ENCODE measurements at regions of chr1 and their contacts with region 1.

Region 1: DNA sequence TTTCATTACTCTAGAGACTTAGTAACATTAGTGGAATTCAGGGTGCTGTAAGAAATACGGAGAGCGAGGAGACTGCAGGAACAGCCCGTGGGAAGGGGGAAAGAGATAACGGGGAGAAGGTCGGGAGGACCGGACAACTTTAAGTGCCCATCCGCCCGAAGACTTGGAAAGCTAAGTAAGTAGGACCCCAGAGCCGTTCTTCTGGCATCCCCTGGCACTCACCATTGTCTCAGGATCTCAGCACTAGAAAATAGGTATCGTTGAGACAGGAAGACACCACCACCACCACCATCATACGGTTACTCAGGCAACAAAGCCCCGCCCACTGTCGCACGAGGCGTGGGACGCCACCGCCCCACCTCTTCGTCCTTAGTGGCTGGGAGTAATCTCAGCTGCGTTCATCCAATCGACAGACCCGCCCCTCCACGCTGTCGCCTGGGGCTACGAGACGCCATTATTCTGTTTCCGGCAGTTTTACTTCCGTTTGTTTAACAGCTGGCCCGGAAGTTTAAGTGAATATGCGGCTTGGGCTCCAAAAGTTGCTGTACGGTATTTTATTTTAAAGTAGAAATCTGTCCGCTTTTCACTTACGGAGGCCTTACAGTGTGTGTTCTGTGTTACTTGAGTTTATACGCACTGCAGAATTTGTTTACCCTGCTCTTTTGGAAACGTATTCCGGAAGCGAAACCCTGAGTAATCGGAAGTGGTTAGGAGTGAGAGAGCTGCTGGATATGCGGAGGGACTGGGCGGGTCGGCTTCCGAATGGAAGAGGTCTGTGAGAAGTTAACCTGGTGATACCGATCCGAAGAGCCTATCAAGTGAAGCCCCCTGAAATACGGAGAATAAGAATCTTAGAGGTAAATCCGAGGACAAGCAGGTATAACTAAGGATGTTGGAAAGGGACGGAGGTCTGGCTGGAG is at the starts of genes BLZF1 and NME7:
- DNase-seq: peak; percentile 91 to 99 (median 98)
- ATAC-seq: peak; percentile 99
- H3K4me3 ChIP-seq: peak within 1 kb of the TSS; percentile 87
- H3K4me3 Mint-ChIP-seq: peak within 1 kb of the TSS in 3 of 10 donors; percentile 19 to 72 (median 71)
- H3K27ac ChIP-seq: peak within 1 kb of the TSS; percentile 85
- H3K27ac Mint-ChIP-seq: peak within 1 kb of the TSS in 2 of 9 donors; percentile 73 to 78
- H3K4me1 ChIP-seq: peaks cover 4 to 14% of the 10 kb centered on the region in 2 donors
- H3K4me1 Mint-ChIP-seq: peaks cover 20 to 48% (median 28%) of the 10 kb centered on the region in 7 donors
- H3K27me3 ChIP-seq: no peaks in the 10 kb centered on the region
- H3K27me3 Mint-ChIP-seq: no peaks in the 10 kb centered on the region
- total RNA-seq, gene BLZF1: 9.9 to 26.8 (median 17.5) TPM
- total RNA-seq, gene NME7: 8.6 to 14.5 (median 12.7) TPM

Region 2: DNA sequence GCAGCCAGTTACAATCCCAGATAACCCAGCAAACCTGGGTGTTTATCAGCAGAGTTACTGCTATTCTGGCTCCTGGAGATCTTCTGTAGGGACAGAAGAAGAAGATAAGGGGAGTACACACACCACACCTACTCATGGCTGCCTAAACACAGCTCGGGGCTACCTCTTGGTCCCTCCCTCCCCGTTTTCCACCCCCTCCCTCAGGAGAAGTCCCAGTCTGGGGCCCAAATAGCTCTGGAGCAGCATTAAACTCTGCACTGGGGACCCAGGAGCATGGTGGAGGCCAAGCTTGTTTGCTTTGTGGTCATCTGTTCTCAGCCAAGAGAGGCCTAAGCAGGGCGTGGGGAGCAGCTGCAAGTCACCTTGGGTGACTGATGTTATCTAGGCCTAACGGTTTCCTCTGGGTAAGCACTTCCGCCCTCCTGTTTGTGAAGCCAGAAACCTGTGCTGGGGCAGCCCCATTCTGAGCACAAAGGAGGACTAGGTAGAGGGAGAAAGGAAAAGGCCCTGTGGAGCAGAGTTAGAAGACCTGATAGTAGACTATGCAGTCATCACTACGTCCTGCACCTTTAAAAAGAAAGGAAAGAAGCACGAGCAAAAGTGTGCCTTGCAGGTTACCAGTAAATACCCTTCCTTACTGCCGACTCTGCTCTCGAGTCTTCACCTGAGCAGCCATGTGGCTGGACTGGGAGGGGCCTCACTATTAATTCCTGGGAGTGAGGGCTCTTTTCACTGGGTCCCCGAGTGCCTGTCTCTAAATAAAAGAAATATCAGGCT is 1739.7 kb before region 1 on chr1:
- CTCF ChIA-PET with region 1: no interaction called
- POLR2A ChIA-PET with region 1: no interaction called
- intact Hi-C with region 1: loop called in 1 of 2 experiments (anchors 2 kb)
- DNase-seq: peak; percentile 33 to 84 (median 73)
- ATAC-seq: peak; percentile 84
- H3K4me3 ChIP-seq: peak overlapping the region; percentile 48
- H3K4me3 Mint-ChIP-seq: peak overlapping the region; percentile 82 to 99 (median 92)
- H3K27ac ChIP-seq: peak overlapping the region; percentile 94
- H3K27ac Mint-ChIP-seq: peak overlapping the region; percentile 85 to 98 (median 95)
- H3K4me1 ChIP-seq: peaks cover 44 to 46% of the 10 kb centered on the region in 2 donors
- H3K4me1 Mint-ChIP-seq: peaks cover 48 to 69% (median 63%) of the 10 kb centered on the region in 7 donors
- H3K27me3 ChIP-seq: no peaks in the 10 kb centered on the region
- H3K27me3 Mint-ChIP-seq: no peaks in the 10 kb centered on the region

Region 3: GRCh38 chr1:168225476-168226190 is 1142.1 kb before region 1 on chr1 and contains the start of gene SFT2D2:
- CTCF ChIA-PET with region 1: no interaction called
- POLR2A ChIA-PET with region 1: no interaction called
- intact Hi-C with region 1: loop called (anchors 1 to 5 kb)
- DNase-seq: peak; percentile 71 to 86 (median 83)
- ATAC-seq: peak; percentile 97
- H3K4me3 ChIP-seq: peak within 1 kb of the TSS; percentile 88
- H3K4me3 Mint-ChIP-seq: peak within 1 kb of the TSS; percentile 92 to 98 (median 96)
- H3K27ac ChIP-seq: peak within 1 kb of the TSS; percentile 85
- H3K27ac Mint-ChIP-seq: peak within 1 kb of the TSS; percentile 81 to 98 (median 92)
- H3K4me1 ChIP-seq: peaks cover 14 to 15% of the 10 kb centered on the region in 2 donors
- H3K4me1 Mint-ChIP-seq: peaks cover 30 to 56% (median 45%) of the 10 kb centered on the region in 7 donors
- H3K27me3 ChIP-seq: no peaks in the 10 kb centered on the region
- H3K27me3 Mint-ChIP-seq: peaks cover 0 to 7% (median 4%) of the 10 kb centered on the region in 5 donors
- total RNA-seq, gene SFT2D2: 46.9 to 79.8 (median 51.3) TPM

Region 4: GRCh38 chr1:169106095-169106920 is 261.4 kb before region 1 on chr1 and contains the start of gene ATP1B1:
- CTCF ChIA-PET with region 1: no interaction called
- POLR2A ChIA-PET with region 1: interaction called, 3 read pairs
- intact Hi-C with region 1: loop called (anchors 1 to 2 kb)
- DNase-seq: peak; percentile 66 to 90 (median 76)
- ATAC-seq: peak; percentile 95
- H3K4me3 ChIP-seq: peak within 1 kb of the TSS; percentile 67
- H3K4me3 Mint-ChIP-seq: peak within 1 kb of the TSS; percentile 81 to 93 (median 88)
- H3K27ac ChIP-seq: peak within 1 kb of the TSS; percentile 58
- H3K27ac Mint-ChIP-seq: peak within 1 kb of the TSS in 8 of 9 donors; percentile 29 to 85 (median 56)
- H3K4me1 ChIP-seq: peaks cover 7 to 21% of the 10 kb centered on the region in 2 donors
- H3K4me1 Mint-ChIP-seq: peaks cover 24 to 48% (median 40%) of the 10 kb centered on the region in 7 donors
- H3K27me3 ChIP-seq: no peaks in the 10 kb centered on the region
- H3K27me3 Mint-ChIP-seq: peaks cover 0 to 19% (median 0%) of the 10 kb centered on the region in 5 donors
- total RNA-seq, gene ATP1B1: 1.8 to 10.6 (median 2.3) TPM

Region 5: GRCh38 chr1:169586395-169587255 is 218.9 kb after region 1 on chr1 and contains the start of gene F5:
- CTCF ChIA-PET with region 1: no interaction called
- POLR2A ChIA-PET with region 1: no interaction called
- intact Hi-C with region 1: loop called in 1 of 2 experiments (anchors 5 kb)
- DNase-seq: peak; percentile 53 to 78 (median 74)
- ATAC-seq: peak; percentile 98
- H3K4me3 ChIP-seq: peak within 1 kb of the TSS; percentile 47
- H3K4me3 Mint-ChIP-seq: peak within 1 kb of the TSS; percentile 81 to 93 (median 90)
- H3K27ac ChIP-seq: peak within 1 kb of the TSS; percentile 66
- H3K27ac Mint-ChIP-seq: peak within 1 kb of the TSS; percentile 50 to 94 (median 86)
- H3K4me1 ChIP-seq: peaks cover 10 to 14% of the 10 kb centered on the region in 2 donors
- H3K4me1 Mint-ChIP-seq: peaks cover 18 to 71% (median 53%) of the 10 kb centered on the region in 7 donors
- H3K27me3 ChIP-seq: no peaks in the 10 kb centered on the region
- H3K27me3 Mint-ChIP-seq: peaks cover 0 to 4% (median 0%) of the 10 kb centered on the region in 5 donors
- total RNA-seq, gene F5: 3.7 to 14.6 (median 5.7) TPM

Region 6: GRCh38 chr1:169794530-169795416 is 427.0 kb after region 1 on chr1 and contains the start of gene METTL18:
- CTCF ChIA-PET with region 1: no interaction called
- POLR2A ChIA-PET with region 1: interaction called, 5 read pairs
- intact Hi-C with region 1: loop called (anchors 1 kb)
- DNase-seq: peak; percentile 72 to 96 (median 92)
- ATAC-seq: peak; percentile 100
- H3K4me3 ChIP-seq: peak within 1 kb of the TSS; percentile 98
- H3K4me3 Mint-ChIP-seq: peak within 1 kb of the TSS; percentile 90 to 100 (median 100)
- H3K27ac ChIP-seq: peak within 1 kb of the TSS; percentile 94
- H3K27ac Mint-ChIP-seq: peak within 1 kb of the TSS; percentile 97 to 100 (median 99)
- H3K4me1 ChIP-seq: peaks cover 10 to 28% of the 10 kb centered on the region in 2 donors
- H3K4me1 Mint-ChIP-seq: peaks cover 26 to 60% (median 56%) of the 10 kb centered on the region in 7 donors
- H3K27me3 ChIP-seq: no peaks in the 10 kb centered on the region
- H3K27me3 Mint-ChIP-seq: no peaks in the 10 kb centered on the region
- total RNA-seq, gene METTL18: 4.9 to 21.1 (median 13.4) TPM

Region 7: DNA sequence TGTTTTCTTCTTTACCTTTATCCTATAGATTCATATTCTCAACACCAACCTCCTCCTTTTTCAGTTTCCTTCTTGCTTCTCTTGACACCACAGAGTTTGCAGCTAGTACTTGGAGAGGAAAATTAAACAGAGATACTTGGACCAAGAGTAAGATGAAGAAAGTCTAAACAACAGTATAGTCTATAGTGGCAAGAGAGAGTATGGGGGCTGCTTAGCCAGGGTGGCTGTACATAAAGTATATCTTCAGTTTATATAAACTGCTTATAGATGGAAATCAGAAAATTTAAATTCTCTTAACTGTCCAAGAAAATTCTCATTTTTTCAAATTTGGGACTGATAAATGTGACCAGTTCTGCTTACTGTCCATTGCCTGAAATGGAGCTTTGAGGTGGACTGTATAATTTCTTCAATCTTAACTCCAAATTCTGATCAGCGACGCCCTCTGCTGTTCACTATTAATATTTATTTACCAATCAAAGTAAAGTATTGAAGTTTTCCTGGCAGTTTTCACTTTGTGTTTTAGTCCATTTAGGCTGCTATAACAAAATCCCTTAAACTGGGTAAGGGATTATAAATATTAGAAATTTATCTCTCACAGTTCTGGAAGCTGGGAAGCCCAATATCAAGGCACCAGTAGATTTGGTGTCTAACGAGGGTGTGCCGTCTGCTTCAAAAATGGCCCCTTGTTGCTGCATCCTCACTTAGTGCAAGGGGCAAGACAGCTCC is 441.8 kb after region 1 on chr1:
- CTCF ChIA-PET with region 1: no interaction called
- POLR2A ChIA-PET with region 1: no interaction called
- intact Hi-C with region 1: no loop called
- DNase-seq: peak in 6 of 9 donors; percentile 3 to 44 (median 33)
- ATAC-seq: peak; percentile 65
- H3K4me3 ChIP-seq: no peak overlapping the region
- H3K4me3 Mint-ChIP-seq: no peak overlapping the region
- H3K27ac ChIP-seq: no peak overlapping the region
- H3K27ac Mint-ChIP-seq: no peak overlapping the region
- H3K4me1 ChIP-seq: no peaks in the 10 kb centered on the region
- H3K4me1 Mint-ChIP-seq: peaks cover 0 to 16% (median 0%) of the 10 kb centered on the region in 7 donors
- H3K27me3 ChIP-seq: no peaks in the 10 kb centered on the region
- H3K27me3 Mint-ChIP-seq: no peaks in the 10 kb centered on the region

Region 8: DNA sequence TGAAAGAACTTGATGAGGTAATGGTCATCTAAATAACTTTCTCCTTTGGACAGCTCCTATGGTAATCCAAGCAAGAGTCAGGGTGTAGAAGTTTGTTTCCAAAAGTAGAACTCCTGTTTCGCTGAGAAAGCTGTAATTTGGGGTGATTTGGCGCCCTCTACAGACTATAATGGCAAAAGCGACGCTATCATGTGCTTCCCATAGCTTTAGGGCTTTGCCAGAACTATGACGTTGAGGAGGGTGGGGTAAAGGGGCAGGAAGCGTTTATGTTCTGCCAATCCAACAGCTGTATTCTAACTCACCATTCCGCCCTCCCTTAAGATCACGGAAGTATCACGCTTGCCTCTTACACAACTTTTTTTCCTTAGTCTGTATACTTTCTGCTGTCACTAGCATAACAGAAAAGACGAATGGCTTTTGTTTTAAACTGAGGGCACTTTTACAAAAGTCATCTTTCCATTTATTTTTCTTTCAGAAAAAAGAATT is 1946.1 kb after region 1 on chr1 and contains the start of gene FMO4:
- CTCF ChIA-PET with region 1: no interaction called
- POLR2A ChIA-PET with region 1: no interaction called
- intact Hi-C with region 1: loop called in 1 of 2 experiments (anchors 10 kb)
- DNase-seq: peak; percentile 35 to 94 (median 90)
- ATAC-seq: peak; percentile 100
- H3K4me3 ChIP-seq: peak within 1 kb of the TSS; percentile 26
- H3K4me3 Mint-ChIP-seq: peak within 1 kb of the TSS; percentile 35 to 86 (median 81)
- H3K27ac ChIP-seq: peak within 1 kb of the TSS; percentile 56
- H3K27ac Mint-ChIP-seq: peak within 1 kb of the TSS; percentile 73 to 96 (median 90)
- H3K4me1 ChIP-seq: peaks cover 5 to 7% of the 10 kb centered on the region in 2 donors
- H3K4me1 Mint-ChIP-seq: peaks cover 4 to 34% (median 26%) of the 10 kb centered on the region in 7 donors
- H3K27me3 ChIP-seq: no peaks in the 10 kb centered on the region
- H3K27me3 Mint-ChIP-seq: no peaks in the 10 kb centered on the region
- total RNA-seq, gene FMO4: 1.2 to 3.7 (median 3.3) TPM